ENCODE measurements at regions of chr11 and their contacts with region 1.

Region 1: GRCh38 chr11:575996-576768 is at the start of gene PHRF1:
- DNase-seq: peak; percentile 93
- ATAC-seq: peak; percentile 90
- H3K4me3 Mint-ChIP-seq: peak within 1 kb of the TSS; percentile 97
- H3K27ac Mint-ChIP-seq: peak within 1 kb of the TSS; percentile 100
- H3K4me1 Mint-ChIP-seq: peaks cover 39% of the 10 kb centered on the region
- H3K27me3 Mint-ChIP-seq: peaks cover 10% of the 10 kb centered on the region
- CTCF ChIP-seq: no peak
- total RNA-seq, gene PHRF1: 42.7 and 49.6 TPM in 2 replicates

Region 2: DNA sequence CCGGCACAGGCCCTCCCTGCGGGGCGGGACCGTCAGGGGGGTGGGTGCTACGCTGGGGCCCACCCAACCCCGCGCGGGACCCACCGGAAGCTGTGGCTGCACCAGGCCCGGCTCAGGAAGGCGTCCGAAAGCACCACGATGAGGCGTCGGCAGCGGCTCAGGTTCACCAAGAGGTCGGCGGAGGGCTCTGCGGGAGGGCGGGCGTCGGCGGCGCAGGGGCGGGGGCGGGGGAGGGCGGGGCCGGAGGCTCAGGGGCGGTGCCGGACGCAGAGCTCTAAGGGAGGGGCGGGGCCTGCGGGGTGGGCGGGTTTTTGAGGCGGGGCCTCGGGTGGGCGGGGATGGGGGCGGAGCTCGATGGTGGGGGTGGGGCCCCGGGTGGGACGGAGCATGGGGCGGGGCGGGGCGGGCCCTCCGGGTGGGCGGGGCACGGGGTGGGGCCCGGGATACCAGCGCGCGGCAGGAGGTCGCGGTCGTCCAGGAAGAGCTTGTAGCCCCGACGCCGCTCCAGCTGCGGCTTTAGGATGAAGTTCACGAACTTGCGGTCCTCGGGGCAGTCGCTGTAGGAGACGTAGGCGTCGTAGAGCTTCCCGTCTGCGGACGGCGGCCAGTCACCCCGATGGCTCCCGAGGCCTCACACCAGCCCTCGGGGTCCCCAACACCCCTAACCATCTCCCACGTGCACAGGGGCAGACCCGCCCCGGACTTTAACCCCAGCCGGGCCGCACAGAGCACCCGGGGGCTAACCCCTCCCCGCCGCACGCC is 169.0 kb before region 1 on chr11:
- CTCF ChIA-PET with region 1: no interaction called
- POLR2A ChIA-PET with region 1: no interaction called
- intact Hi-C with region 1: loop called (anchors 1 kb)
- DNase-seq: peak; percentile 76
- ATAC-seq: peak; percentile 85
- H3K4me3 Mint-ChIP-seq: peak overlapping the region; percentile 60
- H3K27ac Mint-ChIP-seq: peak overlapping the region; percentile 35
- H3K4me1 Mint-ChIP-seq: peaks cover 3% of the 10 kb centered on the region
- H3K27me3 Mint-ChIP-seq: no peaks in the 10 kb centered on the region
- CTCF ChIP-seq: no peak

Region 3: DNA sequence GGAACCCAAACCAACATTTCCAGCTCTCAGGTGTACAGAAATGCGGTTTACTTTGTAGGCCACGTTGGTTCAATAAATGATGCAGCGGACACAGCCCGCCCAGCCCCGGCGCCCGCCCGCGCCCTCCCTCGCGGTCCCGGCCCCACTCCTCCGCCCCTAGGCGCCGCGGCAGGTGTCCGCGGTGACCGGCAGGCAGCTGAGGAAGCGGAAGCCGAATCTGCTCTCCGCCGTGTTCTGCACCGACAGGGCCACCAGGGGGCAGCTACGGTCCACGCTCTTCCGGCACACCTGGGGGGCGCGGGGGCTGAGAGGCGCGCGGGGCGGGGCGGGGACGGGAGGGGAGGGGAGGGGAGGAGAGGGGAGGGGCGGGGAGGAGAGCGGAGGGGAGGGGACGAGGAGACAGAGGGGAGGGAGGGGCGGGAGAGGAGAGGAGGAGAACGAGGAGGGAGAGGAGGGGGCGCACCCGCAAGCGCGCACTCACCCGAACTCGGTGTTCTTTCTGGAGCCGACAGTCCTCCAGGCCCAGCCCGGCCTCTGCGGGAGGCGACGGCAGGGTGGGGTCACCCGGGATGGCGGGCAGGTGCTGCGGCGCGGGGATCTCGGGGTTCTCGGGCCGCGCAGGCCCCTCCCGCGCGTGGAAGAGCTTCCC is 21.2 kb before region 1 on chr11:
- CTCF ChIA-PET with region 1: interaction called, 4 read pairs
- POLR2A ChIA-PET with region 1: interaction called, 26 read pairs
- intact Hi-C with region 1: loop called (anchors 1 kb)
- DNase-seq: peak; percentile 70
- ATAC-seq: peak; percentile 93
- H3K4me3 Mint-ChIP-seq: peak overlapping the region; percentile 24
- H3K27ac Mint-ChIP-seq: no peak overlapping the region
- H3K4me1 Mint-ChIP-seq: peaks cover 6% of the 10 kb centered on the region
- H3K27me3 Mint-ChIP-seq: no peaks in the 10 kb centered on the region
- CTCF ChIP-seq: no peak

Region 4: DNA sequence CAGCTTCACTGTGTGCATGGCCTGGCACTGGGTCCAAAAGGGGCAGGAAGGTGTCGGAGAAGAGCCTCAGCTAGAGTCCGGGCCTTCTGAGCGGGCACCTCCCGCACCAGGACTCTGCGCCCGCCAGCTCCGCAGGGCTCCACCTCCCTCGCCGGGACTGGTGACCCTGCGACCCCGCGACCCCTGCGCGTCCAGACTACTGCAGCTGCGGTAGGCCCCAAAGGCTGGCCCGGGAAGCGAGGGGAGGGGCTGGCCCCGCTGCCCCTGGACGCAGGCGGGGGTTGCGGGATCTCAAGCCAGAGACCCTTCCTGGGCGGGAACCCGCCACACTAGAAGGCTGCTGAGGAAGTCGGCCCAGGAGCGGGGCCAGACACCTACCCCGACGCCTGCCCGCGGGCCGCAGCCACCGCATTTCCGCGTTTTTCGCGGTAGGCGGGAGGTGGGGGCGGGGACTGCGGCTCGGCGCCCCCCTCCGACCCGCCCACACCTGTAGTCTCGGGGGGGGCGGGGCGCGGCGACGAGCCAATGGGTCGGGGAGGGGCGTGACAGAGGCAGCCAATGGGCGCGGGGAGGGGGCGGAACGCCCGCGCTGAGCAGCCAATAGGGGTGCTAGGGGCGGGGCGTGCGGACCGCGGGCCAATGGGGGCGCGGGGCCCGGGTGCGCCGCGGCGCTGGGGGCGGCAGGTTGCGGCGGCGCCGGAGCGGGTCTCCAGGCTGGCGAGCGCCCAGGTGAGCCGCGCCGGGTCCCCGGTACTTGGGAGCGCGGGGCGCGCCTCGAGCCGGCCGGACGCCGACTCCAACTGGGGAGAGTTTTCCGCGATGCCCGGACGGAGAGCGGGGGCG is 15.7 kb before region 1 on chr11 and contains the starts of genes LMNTD2 and RASSF7:
- CTCF ChIA-PET with region 1: interaction called, 4 read pairs
- POLR2A ChIA-PET with region 1: interaction called, 26 read pairs
- intact Hi-C with region 1: loop called (anchors 1 kb)
- DNase-seq: peak; percentile 97
- ATAC-seq: peak; percentile 96
- H3K4me3 Mint-ChIP-seq: peak within 1 kb of the TSS; percentile 84
- H3K27ac Mint-ChIP-seq: peak within 1 kb of the TSS; percentile 59
- H3K4me1 Mint-ChIP-seq: peaks cover 17% of the 10 kb centered on the region
- H3K27me3 Mint-ChIP-seq: no peaks in the 10 kb centered on the region
- CTCF ChIP-seq: no peak
- total RNA-seq, gene LMNTD2: 8.6 and 9.1 TPM in 2 replicates
- total RNA-seq, gene RASSF7: 14.2 and 14.9 TPM in 2 replicates

Region 5: GRCh38 chr11:615504-616319 is 39.5 kb after region 1 on chr11 and contains the start of gene IRF7:
- CTCF ChIA-PET with region 1: no interaction called
- POLR2A ChIA-PET with region 1: interaction called, 23 read pairs
- intact Hi-C with region 1: loop called (anchors 1 kb)
- DNase-seq: peak; percentile 92
- ATAC-seq: peak; percentile 95
- H3K4me3 Mint-ChIP-seq: peak within 1 kb of the TSS; percentile 90
- H3K27ac Mint-ChIP-seq: peak within 1 kb of the TSS; percentile 88
- H3K4me1 Mint-ChIP-seq: peaks cover 25% of the 10 kb centered on the region
- H3K27me3 Mint-ChIP-seq: no peaks in the 10 kb centered on the region
- CTCF ChIP-seq: no peak
- total RNA-seq, gene IRF7: 74.1 and 75.5 TPM in 2 replicates

Region 6: DNA sequence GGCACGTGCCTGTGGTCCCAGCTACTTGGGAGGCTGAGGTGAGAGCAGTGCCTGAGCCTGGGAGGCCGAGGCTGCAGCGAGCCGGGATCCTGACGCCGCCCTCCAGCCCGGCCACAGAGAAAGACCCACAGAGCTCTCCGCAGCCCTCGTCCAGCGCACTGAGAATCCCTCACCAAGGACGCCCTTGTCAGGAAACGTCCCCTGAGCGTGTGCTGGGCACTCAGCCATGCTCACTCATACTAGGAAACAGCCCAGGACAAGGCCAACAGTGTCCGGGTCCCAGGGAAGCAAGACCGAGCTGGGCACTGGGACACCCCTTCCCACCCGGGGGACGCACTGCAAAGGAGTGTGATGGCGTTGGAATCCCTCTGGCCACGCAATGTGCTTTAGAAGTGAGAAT is 104.3 kb after region 1 on chr11:
- CTCF ChIA-PET with region 1: no interaction called
- POLR2A ChIA-PET with region 1: no interaction called
- intact Hi-C with region 1: no loop called
- DNase-seq: no peak
- ATAC-seq: no peak
- H3K4me3 Mint-ChIP-seq: no peak overlapping the region
- H3K27ac Mint-ChIP-seq: no peak overlapping the region
- H3K4me1 Mint-ChIP-seq: no peaks in the 10 kb centered on the region
- H3K27me3 Mint-ChIP-seq: no peaks in the 10 kb centered on the region
- CTCF ChIP-seq: no peak